CD8-positive, alpha-beta T cell (primary cell): ENCODE measurements at regions of chr3 and their contacts with region 1.

Region 1: DNA sequence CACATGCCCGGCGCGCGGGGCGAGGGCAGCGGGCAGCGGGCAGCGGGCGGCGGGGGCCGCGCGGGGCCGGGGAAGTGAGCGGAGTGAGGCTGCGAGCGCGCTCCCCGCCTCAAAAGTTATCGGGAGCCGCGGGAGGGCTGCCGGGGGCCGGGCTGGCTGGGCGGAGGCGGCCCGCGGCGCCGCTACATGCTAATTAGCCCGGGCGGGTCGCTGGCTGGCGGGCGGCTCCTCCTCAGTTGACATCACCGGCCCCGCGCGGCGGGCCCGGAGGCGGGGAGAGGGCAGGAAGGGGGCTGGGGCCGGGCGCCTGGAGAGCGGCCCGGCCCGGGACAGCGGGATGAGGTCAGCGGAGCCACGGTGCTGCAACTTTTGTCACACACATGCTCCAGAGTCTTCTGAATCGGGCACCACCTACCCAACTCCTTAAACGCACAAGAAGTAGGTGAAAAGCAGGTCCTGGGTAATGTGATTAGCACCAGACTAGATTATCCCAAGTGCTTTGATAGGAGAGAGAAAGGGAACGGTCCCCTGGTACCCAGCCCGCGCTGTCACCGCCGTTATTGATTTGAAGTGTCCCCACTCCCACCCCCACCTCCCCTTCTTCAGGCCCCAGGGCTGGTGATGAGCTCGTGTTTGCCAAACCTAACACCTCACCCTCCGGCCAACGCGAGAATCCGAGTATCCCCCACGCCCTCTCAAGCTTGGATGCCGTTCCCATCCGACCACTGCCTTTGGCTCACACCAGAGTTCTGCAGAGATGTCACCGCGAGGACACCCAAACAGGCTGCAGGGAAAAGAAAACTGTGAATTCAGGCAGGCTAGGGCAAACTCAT is at the start of gene HEG1:
- DNase-seq: peak; percentile 47 to 87 (median 77)
- ATAC-seq: peak; percentile 61
- H3K4me3 ChIP-seq: peak within 1 kb of the TSS; percentile 70 to 78
- H3K4me3 Mint-ChIP-seq: peak within 1 kb of the TSS; percentile 96
- H3K27ac ChIP-seq: peak within 1 kb of the TSS; percentile 62 to 69
- H3K27ac Mint-ChIP-seq: peak within 1 kb of the TSS; percentile 89
- H3K4me1 ChIP-seq: peaks cover 39% of the 10 kb centered on the region
- H3K4me1 Mint-ChIP-seq: peaks cover 41% of the 10 kb centered on the region
- H3K27me3 ChIP-seq: no peaks in the 10 kb centered on the region
- H3K27me3 Mint-ChIP-seq: peaks cover 10% of the 10 kb centered on the region
- CTCF ChIP-seq: no peak
- total RNA-seq, gene HEG1: 20.8 to 21.5 TPM

Region 2: GRCh38 chr3:124730129-124730940 is 325.8 kb before region 1 on chr3 and contains the start of gene UMPS:
- CTCF ChIA-PET with region 1: no interaction called
- POLR2A ChIA-PET with region 1: no interaction called
- intact Hi-C with region 1: loop called in 1 of 2 experiments (anchors 5 kb)
- DNase-seq: peak; percentile 82 to 95 (median 93)
- ATAC-seq: peak; percentile 91
- H3K4me3 ChIP-seq: peak within 1 kb of the TSS; percentile 96 to 97
- H3K4me3 Mint-ChIP-seq: peak within 1 kb of the TSS; percentile 99
- H3K27ac ChIP-seq: peak within 1 kb of the TSS; percentile 82 to 93
- H3K27ac Mint-ChIP-seq: peak within 1 kb of the TSS; percentile 99
- H3K4me1 ChIP-seq: peaks cover 29% of the 10 kb centered on the region
- H3K4me1 Mint-ChIP-seq: peaks cover 39% of the 10 kb centered on the region
- H3K27me3 ChIP-seq: peaks cover 0 to 4% of the 10 kb centered on the region in 2 experiments
- H3K27me3 Mint-ChIP-seq: peaks cover 10% of the 10 kb centered on the region
- CTCF ChIP-seq: no peak
- total RNA-seq, gene UMPS: 16.7 to 19.8 TPM

Region 3: DNA sequence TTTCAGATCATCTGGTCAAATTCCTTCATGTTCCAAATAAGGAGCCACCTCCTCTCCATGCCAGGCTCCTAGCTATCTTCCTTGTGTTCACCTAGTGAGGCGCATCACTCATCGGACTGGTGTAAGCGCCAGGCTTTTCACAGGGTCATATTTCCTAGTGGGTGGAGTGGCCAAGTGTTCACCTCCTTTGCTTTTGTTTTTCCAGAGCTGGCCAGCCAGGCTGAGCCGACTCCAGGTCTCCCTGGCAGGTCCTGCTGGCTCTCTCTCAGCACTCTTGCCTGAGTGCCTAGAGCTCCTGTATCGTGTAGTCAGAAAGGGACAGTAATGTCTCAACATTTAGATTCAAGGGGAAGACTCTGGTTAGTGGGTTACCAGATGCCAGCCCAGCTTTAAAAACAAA is 31.3 kb before region 1 on chr3:
- CTCF ChIA-PET with region 1: no interaction called
- POLR2A ChIA-PET with region 1: interaction called, 3 read pairs
- intact Hi-C with region 1: loop called in 1 of 2 experiments (anchors 5 kb)
- DNase-seq: no peak
- ATAC-seq: no peak
- H3K4me3 ChIP-seq: no peak overlapping the region
- H3K4me3 Mint-ChIP-seq: no peak overlapping the region
- H3K27ac ChIP-seq: no peak overlapping the region
- H3K27ac Mint-ChIP-seq: no peak overlapping the region
- H3K4me1 ChIP-seq: peaks cover 20% of the 10 kb centered on the region
- H3K4me1 Mint-ChIP-seq: peaks cover 39% of the 10 kb centered on the region
- H3K27me3 ChIP-seq: no peaks in the 10 kb centered on the region
- H3K27me3 Mint-ChIP-seq: no peaks in the 10 kb centered on the region
- CTCF ChIP-seq: no peak

Region 4: DNA sequence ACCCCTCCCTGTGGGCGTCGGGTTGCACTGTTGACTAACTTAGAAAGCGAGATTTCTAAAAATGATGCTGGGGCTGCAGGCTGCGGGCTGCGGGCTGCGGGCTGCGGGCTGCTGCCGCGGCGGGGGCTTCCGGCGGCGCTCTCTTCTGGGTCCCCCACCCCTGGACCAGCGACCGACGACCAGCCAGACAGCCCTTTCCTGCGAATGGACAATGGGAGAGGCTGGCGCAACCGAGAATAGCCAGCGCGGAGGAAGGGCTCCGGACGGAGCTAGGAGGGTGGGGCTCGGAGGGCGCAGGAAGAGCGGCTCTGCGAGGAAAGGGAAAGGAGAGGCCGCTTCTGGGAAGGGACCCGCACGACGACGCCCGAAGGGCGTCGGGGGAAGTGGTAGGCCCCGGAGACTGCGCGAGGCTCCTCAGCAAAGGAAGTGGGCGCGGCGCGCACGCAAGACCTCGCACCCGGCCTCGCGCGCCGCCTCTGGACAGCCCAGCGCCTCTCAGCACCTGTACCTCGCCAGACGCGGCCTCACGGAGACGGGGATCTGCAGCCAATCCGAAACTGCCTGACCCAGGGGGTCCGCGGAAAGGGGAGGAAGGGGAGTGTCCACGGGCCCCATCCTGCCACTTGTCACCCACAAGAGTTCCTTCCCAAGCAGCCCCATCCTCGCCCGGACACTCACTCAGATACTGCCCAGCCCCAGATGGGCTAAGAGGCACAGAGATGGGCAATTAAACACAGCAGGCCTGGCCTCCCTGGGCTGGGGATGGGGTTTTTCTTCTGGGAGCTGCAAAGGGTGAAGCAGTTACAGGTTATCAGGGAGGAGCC is 85.7 kb after region 1 on chr3:
- CTCF ChIA-PET with region 1: interaction called, 6 read pairs
- POLR2A ChIA-PET with region 1: interaction called, 8 read pairs
- intact Hi-C with region 1: loop called (anchors 1 to 5 kb)
- DNase-seq: peak; percentile 29 to 89 (median 68)
- ATAC-seq: peak; percentile 88
- H3K4me3 ChIP-seq: peak overlapping the region; percentile 41 to 59
- H3K4me3 Mint-ChIP-seq: peak overlapping the region; percentile 75
- H3K27ac ChIP-seq: peak overlapping the region; percentile 12 to 59
- H3K27ac Mint-ChIP-seq: peak overlapping the region; percentile 87
- H3K4me1 ChIP-seq: peaks cover 19% of the 10 kb centered on the region
- H3K4me1 Mint-ChIP-seq: peaks cover 35% of the 10 kb centered on the region
- H3K27me3 ChIP-seq: no peaks in the 10 kb centered on the region
- H3K27me3 Mint-ChIP-seq: no peaks in the 10 kb centered on the region
- CTCF ChIP-seq: peak; percentile 40

Region 5: GRCh38 chr3:125374996-125375941 is 319.1 kb after region 1 on chr3 and contains the start of gene ZNF148:
- CTCF ChIA-PET with region 1: no interaction called
- POLR2A ChIA-PET with region 1: interaction called, 5 read pairs
- intact Hi-C with region 1: loop called (anchors 1 to 2 kb)
- DNase-seq: peak; percentile 85 to 95 (median 91)
- ATAC-seq: peak; percentile 91
- H3K4me3 ChIP-seq: peak within 1 kb of the TSS; percentile 71 to 89
- H3K4me3 Mint-ChIP-seq: peak within 1 kb of the TSS; percentile 94
- H3K27ac ChIP-seq: peak within 1 kb of the TSS; percentile 94 to 95
- H3K27ac Mint-ChIP-seq: peak within 1 kb of the TSS; percentile 98
- H3K4me1 ChIP-seq: peaks cover 29% of the 10 kb centered on the region
- H3K4me1 Mint-ChIP-seq: peaks cover 41% of the 10 kb centered on the region
- H3K27me3 ChIP-seq: no peaks in the 10 kb centered on the region
- H3K27me3 Mint-ChIP-seq: no peaks in the 10 kb centered on the region
- CTCF ChIP-seq: no peak
- total RNA-seq, gene ZNF148: 32.2 to 35.9 TPM

Region 6: DNA sequence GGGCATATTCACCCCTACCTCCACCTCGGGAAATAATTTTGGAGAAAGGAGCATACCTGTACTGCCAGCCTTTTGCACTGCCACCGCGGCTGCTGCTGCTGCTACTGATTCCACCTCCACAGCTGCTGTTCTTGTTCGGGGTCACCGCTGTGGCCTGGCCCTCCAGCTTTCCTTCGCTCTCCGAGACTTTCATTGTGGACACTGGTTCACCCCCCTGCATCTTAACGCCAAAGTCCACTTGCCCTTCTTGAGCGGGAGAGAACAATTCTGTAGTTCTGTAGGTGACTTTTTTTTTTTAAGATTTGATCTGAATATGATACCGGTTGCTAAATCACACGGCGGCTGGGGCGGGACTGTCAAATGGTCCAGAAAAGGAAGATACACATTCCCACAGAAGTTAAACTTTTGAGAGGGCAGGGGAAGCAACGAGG is 538.5 kb after region 1 on chr3:
- CTCF ChIA-PET with region 1: interaction called, 3 read pairs
- POLR2A ChIA-PET with region 1: no interaction called
- intact Hi-C with region 1: loop called (anchors 10 kb)
- DNase-seq: peak in 2 of 9 experiments; percentile 6 to 17
- ATAC-seq: no peak
- H3K4me3 ChIP-seq: peak overlapping the region; percentile 85 to 91
- H3K4me3 Mint-ChIP-seq: peak overlapping the region; percentile 92
- H3K27ac ChIP-seq: peak overlapping the region; percentile 68 to 87
- H3K27ac Mint-ChIP-seq: peak overlapping the region; percentile 77
- H3K4me1 ChIP-seq: peaks cover 16% of the 10 kb centered on the region
- H3K4me1 Mint-ChIP-seq: peaks cover 44% of the 10 kb centered on the region
- H3K27me3 ChIP-seq: no peaks in the 10 kb centered on the region
- H3K27me3 Mint-ChIP-seq: no peaks in the 10 kb centered on the region
- CTCF ChIP-seq: no peak